Prostate gland (tissue), 2 donors: ENCODE measurements at regions of chr1 and their contacts with region 1.

Region 1: GRCh38 chr1:119743781-119744597 is 24.7 kb downstream of the HMGCS2 start:
- DNase-seq: peak; percentile 69
- H3K4me3 ChIP-seq: no peak overlapping the region
- H3K27ac ChIP-seq: no peak overlapping the region
- H3K4me1 ChIP-seq: no peaks in the 10 kb centered on the region
- H3K27me3 ChIP-seq: no peaks in the 10 kb centered on the region
- CTCF ChIP-seq: peak; percentile 65 to 80 (median 76)
- POLR2A ChIP-seq: no peak

Region 2: DNA sequence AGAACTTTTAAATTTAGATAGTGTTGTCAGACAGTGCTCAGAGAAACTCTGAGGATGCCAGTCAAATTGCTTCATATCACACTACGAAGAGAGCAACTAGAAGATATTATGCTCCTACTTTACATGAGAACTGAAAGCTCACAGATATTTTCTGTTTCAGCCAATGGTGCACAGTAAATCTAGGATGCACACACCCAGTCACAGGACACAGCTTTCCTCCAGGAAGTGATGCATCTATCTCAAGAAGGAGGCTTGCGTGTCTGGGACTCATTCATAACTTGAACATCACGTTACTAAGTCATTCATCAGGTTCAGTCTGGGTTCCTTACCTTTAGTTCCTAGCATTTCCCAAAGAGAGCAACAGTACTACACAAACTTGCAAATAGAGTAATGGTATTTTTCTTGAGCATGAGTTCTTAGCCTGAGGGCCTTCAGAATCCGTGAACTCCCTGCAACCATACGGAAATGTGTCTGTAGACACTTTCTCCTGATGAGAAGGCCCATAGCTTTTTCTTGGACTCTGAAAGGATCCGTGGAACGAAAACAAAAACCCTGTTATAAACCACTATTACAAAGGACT is 108.1 kb before region 1 on chr1:
- intact Hi-C with region 1: no loop called
- DNase-seq: no peak
- H3K4me3 ChIP-seq: no peak overlapping the region
- H3K27ac ChIP-seq: peak overlapping the region in 1 of 2 donors; percentile 64
- H3K4me1 ChIP-seq: peaks cover 8% of the 10 kb centered on the region
- H3K27me3 ChIP-seq: no peaks in the 10 kb centered on the region
- CTCF ChIP-seq: no peak
- POLR2A ChIP-seq: no peak

Region 3: GRCh38 chr1:119675349-119676345 is 68.3 kb before region 1 on chr1:
- intact Hi-C with region 1: loop called (anchors 2 kb)
- DNase-seq: peak; percentile 87
- H3K4me3 ChIP-seq: peak overlapping the region; percentile 15 to 21
- H3K27ac ChIP-seq: peak overlapping the region; percentile 62 to 64
- H3K4me1 ChIP-seq: no peaks in the 10 kb centered on the region
- H3K27me3 ChIP-seq: no peaks in the 10 kb centered on the region
- CTCF ChIP-seq: peak; percentile 82 to 95 (median 84)
- POLR2A ChIP-seq: no peak

Region 4: DNA sequence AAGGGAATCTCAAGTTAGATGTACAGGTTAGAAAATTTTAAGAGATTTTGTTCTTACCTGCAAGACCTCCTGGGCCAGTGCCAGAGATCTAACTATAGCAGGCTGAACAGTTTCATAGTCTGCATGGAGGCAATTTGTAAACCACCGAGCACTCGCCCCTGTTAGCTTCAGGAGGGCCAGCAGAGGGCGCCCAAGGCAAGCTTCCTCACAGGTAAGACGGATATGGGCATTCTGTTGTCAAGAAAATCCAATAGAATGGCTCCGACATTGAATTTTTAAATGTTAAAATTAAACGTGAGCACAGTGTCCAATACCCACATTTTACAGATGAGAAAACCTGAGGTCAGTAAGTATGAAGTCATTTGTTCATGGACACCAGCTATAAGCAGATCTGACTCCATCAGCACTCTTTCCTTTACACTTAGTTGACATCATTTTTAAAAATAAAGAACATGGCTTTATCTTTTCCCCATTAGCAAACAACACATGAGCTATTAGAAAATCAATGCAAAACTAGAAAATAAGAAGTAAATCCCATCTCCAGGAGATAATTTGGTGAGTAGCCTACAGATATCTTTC is 65.1 kb after region 1 on chr1:
- intact Hi-C with region 1: loop called (anchors 5 kb)
- DNase-seq: peak; percentile 75
- H3K4me3 ChIP-seq: no peak overlapping the region
- H3K27ac ChIP-seq: no peak overlapping the region
- H3K4me1 ChIP-seq: no peaks in the 10 kb centered on the region
- H3K27me3 ChIP-seq: no peaks in the 10 kb centered on the region
- CTCF ChIP-seq: peak; percentile 58 to 75 (median 70)
- POLR2A ChIP-seq: no peak